ENCODE measurements at regions of chr3 and their contacts with region 1.

Region 1: DNA sequence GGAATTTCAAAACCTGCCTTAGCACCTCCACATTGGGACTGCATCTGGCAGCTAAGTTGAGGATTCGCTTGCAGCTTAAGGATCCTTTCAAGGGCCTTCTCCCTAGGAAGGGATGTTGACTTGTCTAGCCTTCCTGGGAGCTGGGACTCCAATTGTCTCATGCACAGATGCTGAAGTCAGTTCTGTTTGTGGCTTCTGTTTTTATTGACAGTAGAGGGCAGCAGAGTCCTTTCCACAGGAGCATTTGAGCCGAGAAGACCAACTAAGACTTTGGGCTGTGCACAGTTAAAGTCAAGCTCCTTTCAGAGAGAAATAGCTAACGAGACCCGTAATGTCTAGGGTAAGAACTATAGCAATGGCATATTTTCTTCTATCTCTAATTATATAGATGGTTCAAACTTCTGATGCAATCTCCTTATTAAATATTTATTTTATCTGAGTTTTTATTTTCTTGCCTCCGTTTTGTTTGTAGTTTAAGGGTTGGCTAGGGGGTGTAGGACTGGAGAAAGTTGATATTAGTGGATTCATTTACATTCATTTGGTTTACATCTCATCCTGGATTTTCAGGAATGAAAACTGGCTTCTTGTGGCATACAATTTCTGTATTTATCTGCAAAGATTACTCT is 59.7 kb upstream of the KBTBD8 start:
- DNase-seq: peak; percentile 55
- ATAC-seq: peak; percentile 76
- H3K4me3 ChIP-seq: no peak overlapping the region
- H3K27ac ChIP-seq: no peak overlapping the region
- H3K4me1 ChIP-seq: no peaks in the 10 kb centered on the region
- H3K27me3 ChIP-seq: no peaks in the 10 kb centered on the region
- CTCF ChIP-seq: peak; percentile 54

Region 2: DNA sequence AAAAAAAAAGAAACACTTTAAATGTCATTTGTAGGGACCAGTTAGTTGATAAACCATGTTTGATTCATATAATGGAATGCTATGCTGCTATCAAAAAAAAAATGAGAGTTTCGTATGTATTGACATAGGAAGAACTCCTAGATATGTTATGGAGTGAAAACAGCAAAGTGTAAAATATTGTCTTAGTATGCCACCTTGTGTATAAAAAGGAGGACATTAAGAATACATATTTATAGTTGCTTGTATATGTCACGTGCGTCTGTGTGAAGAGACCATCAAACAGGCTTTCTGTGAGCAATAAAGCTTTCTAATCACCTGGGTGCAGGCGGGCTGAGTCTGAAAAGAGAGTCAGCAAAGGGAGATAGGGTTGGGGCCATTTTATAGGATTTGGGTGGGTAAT is 99.2 kb after region 1 on chr3:
- CTCF ChIA-PET with region 1: no interaction called
- POLR2A ChIA-PET with region 1: no interaction called
- intact Hi-C with region 1: loop called (anchors 1 kb)
- DNase-seq: no peak
- ATAC-seq: no peak; the same call in 1 of the 2 replicates
- H3K4me3 ChIP-seq: no peak overlapping the region
- H3K27ac ChIP-seq: no peak overlapping the region
- H3K4me1 ChIP-seq: no peaks in the 10 kb centered on the region
- H3K27me3 ChIP-seq: no peaks in the 10 kb centered on the region
- CTCF ChIP-seq: no peak

Region 3: DNA sequence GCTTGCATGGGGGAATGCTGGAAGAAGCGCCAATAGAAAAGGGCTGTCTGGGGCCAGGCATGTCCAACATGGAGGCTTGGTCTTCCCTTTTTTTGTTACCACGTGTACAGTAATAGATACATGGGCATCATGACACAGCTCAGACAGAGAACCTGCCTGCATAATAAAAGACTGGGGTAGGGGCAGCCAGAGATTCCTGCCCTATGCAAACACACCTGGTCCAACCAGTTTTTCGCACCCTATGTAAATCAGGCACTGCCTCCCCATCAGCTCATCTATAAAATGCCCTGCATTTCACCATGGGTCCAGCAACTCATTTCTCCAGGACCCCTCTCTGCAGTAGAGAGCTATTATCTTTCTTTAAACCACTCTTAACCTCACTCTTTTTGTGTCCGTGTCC is 325.4 kb after region 1 on chr3:
- CTCF ChIA-PET with region 1: no interaction called
- POLR2A ChIA-PET with region 1: no interaction called
- intact Hi-C with region 1: no loop called
- DNase-seq: no peak
- ATAC-seq: no peak
- H3K4me3 ChIP-seq: no peak overlapping the region
- H3K27ac ChIP-seq: no peak overlapping the region
- H3K4me1 ChIP-seq: no peaks in the 10 kb centered on the region
- H3K27me3 ChIP-seq: no peaks in the 10 kb centered on the region
- CTCF ChIP-seq: no peak

Region 4: GRCh38 chr3:68876112-68876713 is 1937.8 kb after region 1 on chr3:
- CTCF ChIA-PET with region 1: interaction called, 3 read pairs
- POLR2A ChIA-PET with region 1: no interaction called
- intact Hi-C with region 1: loop called (anchors 5 kb)
- DNase-seq: peak; percentile 66
- ATAC-seq: peak; percentile 66
- H3K4me3 ChIP-seq: no peak overlapping the region
- H3K27ac ChIP-seq: no peak overlapping the region
- H3K4me1 ChIP-seq: no peaks in the 10 kb centered on the region
- H3K27me3 ChIP-seq: peaks cover 8% of the 10 kb centered on the region; the same call in 1 of the 2 replicates
- CTCF ChIP-seq: peak; percentile 66

Measured in PC-3 (cell line).